ENCODE measurements at regions of chr12 and their contacts with region 1.

Region 1: GRCh38 chr12:19186722-19187661 is 57.5 kb downstream of the PLEKHA5 start:
- DNase-seq: peak in 4 of 5 donors; percentile 8 to 26 (median 22)
- H3K4me3 ChIP-seq: no peak overlapping the region
- H3K4me3 Mint-ChIP-seq: no peak overlapping the region
- H3K27ac ChIP-seq: no peak overlapping the region
- H3K27ac Mint-ChIP-seq: peak overlapping the region in 1 of 7 donors; percentile 57
- H3K4me1 ChIP-seq: no peaks in the 10 kb centered on the region
- H3K4me1 Mint-ChIP-seq: no peaks in the 10 kb centered on the region
- H3K27me3 ChIP-seq: no peaks in the 10 kb centered on the region
- H3K27me3 Mint-ChIP-seq: no peaks in the 10 kb centered on the region

Region 2: DNA sequence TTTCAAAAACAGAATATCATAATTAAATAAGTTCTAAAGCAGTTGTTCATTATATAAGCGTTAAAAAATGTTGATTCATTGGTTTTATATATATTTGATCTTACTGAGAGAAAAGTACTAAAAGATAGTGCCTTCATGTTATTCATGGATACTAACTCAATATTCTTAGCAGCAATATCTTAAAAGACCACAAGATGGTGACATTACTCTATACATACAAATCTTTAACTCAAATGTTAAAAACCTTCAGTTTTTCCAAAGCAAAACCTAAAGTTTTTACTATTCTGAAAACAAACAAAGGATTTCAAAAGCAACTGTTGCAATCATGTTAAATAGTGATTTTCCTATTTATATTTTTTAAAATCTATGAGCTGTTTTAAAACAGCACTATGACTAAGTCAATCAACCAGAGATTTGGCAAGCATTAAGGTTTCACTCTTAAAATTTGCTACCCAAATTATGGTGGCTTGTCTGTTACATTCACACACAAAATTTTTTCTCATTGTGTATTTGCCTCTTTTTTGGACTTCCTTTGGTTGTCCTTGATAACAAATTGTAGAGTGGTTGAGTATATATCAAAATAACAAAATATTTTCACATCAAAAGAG is 1046.9 kb before region 1 on chr12:
- CTCF ChIA-PET with region 1: no interaction called
- POLR2A ChIA-PET with region 1: no interaction called
- intact Hi-C with region 1: loop called (anchors 5 kb)
- DNase-seq: no peak
- H3K4me3 ChIP-seq: no peak overlapping the region
- H3K4me3 Mint-ChIP-seq: no peak overlapping the region
- H3K27ac ChIP-seq: no peak overlapping the region
- H3K27ac Mint-ChIP-seq: no peak overlapping the region
- H3K4me1 ChIP-seq: no peaks in the 10 kb centered on the region
- H3K4me1 Mint-ChIP-seq: no peaks in the 10 kb centered on the region
- H3K27me3 ChIP-seq: no peaks in the 10 kb centered on the region
- H3K27me3 Mint-ChIP-seq: peaks cover 0 to 3% of the 10 kb centered on the region in 2 donors

Region 3: GRCh38 chr12:18250313-18250916 is 936.6 kb before region 1 on chr12:
- CTCF ChIA-PET with region 1: no interaction called
- POLR2A ChIA-PET with region 1: no interaction called
- intact Hi-C with region 1: loop called (anchors 2 kb)
- DNase-seq: no peak
- H3K4me3 ChIP-seq: no peak overlapping the region
- H3K4me3 Mint-ChIP-seq: no peak overlapping the region
- H3K27ac ChIP-seq: no peak overlapping the region
- H3K27ac Mint-ChIP-seq: no peak overlapping the region
- H3K4me1 ChIP-seq: no peaks in the 10 kb centered on the region
- H3K4me1 Mint-ChIP-seq: no peaks in the 10 kb centered on the region
- H3K27me3 ChIP-seq: no peaks in the 10 kb centered on the region
- H3K27me3 Mint-ChIP-seq: no peaks in the 10 kb centered on the region

Region 4: GRCh38 chr12:18861287-18861858 is 325.6 kb before region 1 on chr12:
- CTCF ChIA-PET with region 1: interaction called, 29 read pairs
- POLR2A ChIA-PET with region 1: no interaction called
- intact Hi-C with region 1: no loop called
- DNase-seq: peak in 2 of 5 donors; percentile 4 to 10
- H3K4me3 ChIP-seq: no peak overlapping the region
- H3K4me3 Mint-ChIP-seq: no peak overlapping the region
- H3K27ac ChIP-seq: no peak overlapping the region
- H3K27ac Mint-ChIP-seq: no peak overlapping the region
- H3K4me1 ChIP-seq: no peaks in the 10 kb centered on the region
- H3K4me1 Mint-ChIP-seq: no peaks in the 10 kb centered on the region
- H3K27me3 ChIP-seq: no peaks in the 10 kb centered on the region
- H3K27me3 Mint-ChIP-seq: peaks cover 2 to 4% of the 10 kb centered on the region in 2 donors

Region 5: DNA sequence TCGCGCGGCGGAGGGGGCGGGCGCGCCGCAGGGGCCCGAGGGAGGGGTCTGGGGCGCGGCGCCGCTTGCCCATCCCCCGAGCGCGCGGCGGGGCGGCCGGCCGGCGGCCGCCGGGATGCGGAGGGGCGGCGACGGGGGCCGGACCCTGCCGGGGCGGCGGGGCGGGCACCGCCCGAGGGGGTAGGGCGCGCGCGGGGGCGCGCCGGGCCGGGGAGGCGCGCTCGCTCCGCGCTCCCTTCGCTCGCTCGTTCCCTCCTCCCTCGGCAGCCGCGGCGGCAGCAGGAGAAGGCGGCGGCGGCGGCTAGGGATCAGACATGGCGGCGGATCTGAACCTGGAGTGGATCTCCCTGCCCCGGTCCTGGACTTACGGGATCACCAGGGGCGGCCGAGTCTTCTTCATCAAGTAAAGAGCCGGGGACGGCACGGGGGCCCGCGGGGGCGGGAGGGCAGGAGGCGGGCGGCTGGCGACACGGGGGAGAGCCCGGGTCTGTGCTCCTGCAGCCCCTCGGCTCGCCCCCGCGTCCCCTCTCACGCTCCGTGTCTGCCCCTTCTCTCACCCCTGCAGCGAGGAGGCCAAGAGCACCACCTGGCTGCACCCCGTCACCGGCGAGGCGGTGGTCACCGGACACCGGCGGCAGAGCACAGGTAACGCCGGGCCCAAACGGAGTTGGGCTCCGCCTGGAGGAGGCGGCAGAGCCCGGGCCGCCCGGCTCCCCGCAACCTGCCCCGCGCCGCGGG is 57.3 kb before region 1 on chr12 and contains the start of gene PLEKHA5:
- CTCF ChIA-PET with region 1: interaction called, 7 read pairs
- POLR2A ChIA-PET with region 1: no interaction called
- intact Hi-C with region 1: loop called (anchors 2 kb)
- DNase-seq: peak; percentile 29 to 53 (median 38)
- H3K4me3 ChIP-seq: peak within 1 kb of the TSS; percentile 55 to 74
- H3K4me3 Mint-ChIP-seq: peak within 1 kb of the TSS; percentile 86 to 93 (median 91)
- H3K27ac ChIP-seq: peak within 1 kb of the TSS; percentile 38
- H3K27ac Mint-ChIP-seq: peak within 1 kb of the TSS; percentile 74 to 90 (median 88)
- H3K4me1 ChIP-seq: peaks cover 14% of the 10 kb centered on the region
- H3K4me1 Mint-ChIP-seq: peaks cover 10 to 27% (median 19%) of the 10 kb centered on the region in 4 donors
- H3K27me3 ChIP-seq: no peaks in the 10 kb centered on the region
- H3K27me3 Mint-ChIP-seq: peaks cover 0 to 7% of the 10 kb centered on the region in 2 donors
- total RNA-seq, gene PLEKHA5: 15.6 to 15.9 TPM

Region 6: GRCh38 chr12:19263672-19264071 is 76.7 kb after region 1 on chr12:
- CTCF ChIA-PET with region 1: no interaction called
- POLR2A ChIA-PET with region 1: no interaction called
- intact Hi-C with region 1: no loop called
- DNase-seq: no peak
- H3K4me3 ChIP-seq: no peak overlapping the region
- H3K4me3 Mint-ChIP-seq: no peak overlapping the region
- H3K27ac ChIP-seq: no peak overlapping the region
- H3K27ac Mint-ChIP-seq: peak overlapping the region in 1 of 7 donors; percentile 31
- H3K4me1 ChIP-seq: no peaks in the 10 kb centered on the region
- H3K4me1 Mint-ChIP-seq: no peaks in the 10 kb centered on the region
- H3K27me3 ChIP-seq: no peaks in the 10 kb centered on the region
- H3K27me3 Mint-ChIP-seq: no peaks in the 10 kb centered on the region